Natural killer cell (primary cell): ENCODE measurements at regions of chr11 and their contacts with region 1.

Region 1: DNA sequence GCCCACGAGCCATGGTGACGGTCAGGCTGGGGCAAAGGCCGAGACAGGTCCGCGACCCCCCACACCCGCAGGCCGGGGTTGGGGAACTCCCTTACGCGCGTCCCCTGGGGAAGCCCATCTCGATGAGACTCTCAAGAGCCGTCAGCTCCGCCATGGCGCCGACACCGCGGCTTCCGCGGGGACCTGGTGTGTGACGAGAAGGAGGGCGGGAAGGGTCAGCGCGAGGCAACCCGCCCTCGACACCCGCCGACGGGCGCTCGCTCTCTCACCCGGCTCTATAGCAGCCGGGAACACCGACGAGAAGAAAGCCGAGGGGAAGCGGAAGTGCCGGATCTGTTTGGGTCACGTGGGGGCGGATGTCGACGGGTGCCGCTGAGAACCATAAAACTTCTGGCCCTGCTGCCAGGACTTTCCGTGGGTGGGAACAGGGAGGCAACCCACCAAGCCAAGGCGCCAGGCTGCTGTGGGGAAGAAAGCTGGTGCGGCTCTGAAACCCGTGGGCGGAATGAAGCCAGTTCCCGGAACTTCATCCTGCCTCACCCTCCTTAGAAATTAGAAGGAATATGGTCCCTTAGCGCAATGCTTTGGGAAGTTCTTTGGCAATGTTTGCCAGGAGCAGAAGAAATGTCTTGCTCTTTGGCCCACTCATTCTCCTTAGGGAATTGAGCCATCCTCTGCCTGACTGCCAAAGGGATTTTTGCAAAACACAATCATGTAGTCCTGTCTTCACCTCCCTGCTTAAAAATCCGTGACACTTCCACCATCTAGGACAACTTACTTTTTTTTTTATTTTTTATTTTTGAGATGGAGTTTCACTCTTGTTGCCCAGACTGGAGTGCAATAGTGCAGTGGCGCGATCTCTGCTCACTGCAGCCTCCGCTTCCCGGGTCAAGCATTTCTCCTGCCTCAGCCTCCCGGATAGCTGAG is at the start of gene UBXN1:
- DNase-seq: peak; percentile 79 to 92
- ATAC-seq: peak; percentile 85 to 91 (median 89)
- H3K4me3 ChIP-seq: peak within 1 kb of the TSS; percentile 98
- H3K4me3 Mint-ChIP-seq: peak within 1 kb of the TSS; percentile 93
- H3K27ac ChIP-seq: peak within 1 kb of the TSS; percentile 95
- H3K27ac Mint-ChIP-seq: peak within 1 kb of the TSS; percentile 95 to 99
- H3K4me1 ChIP-seq: peaks cover 21% of the 10 kb centered on the region
- H3K4me1 Mint-ChIP-seq: peaks cover 26 to 31% of the 10 kb centered on the region in 2 donors
- H3K27me3 ChIP-seq: no peaks in the 10 kb centered on the region
- H3K27me3 Mint-ChIP-seq: no peaks in the 10 kb centered on the region
- CTCF ChIP-seq: no peak
- total RNA-seq, gene UBXN1: 179 to 238 (median 238) TPM

Region 2: GRCh38 chr11:61776551-61777075 is 902.4 kb before region 1 on chr11:
- intact Hi-C with region 1: no loop called
- DNase-seq: peak; percentile 55 to 71
- ATAC-seq: peak; percentile 55 to 67 (median 60)
- H3K4me3 ChIP-seq: no peak overlapping the region
- H3K4me3 Mint-ChIP-seq: peak overlapping the region; percentile 69
- H3K27ac ChIP-seq: no peak overlapping the region
- H3K27ac Mint-ChIP-seq: peak overlapping the region; percentile 56 to 85
- H3K4me1 ChIP-seq: peaks cover 42% of the 10 kb centered on the region
- H3K4me1 Mint-ChIP-seq: peaks cover 13 to 28% of the 10 kb centered on the region in 2 donors
- H3K27me3 ChIP-seq: no peaks in the 10 kb centered on the region
- H3K27me3 Mint-ChIP-seq: no peaks in the 10 kb centered on the region
- CTCF ChIP-seq: peak; percentile 70

Region 3: DNA sequence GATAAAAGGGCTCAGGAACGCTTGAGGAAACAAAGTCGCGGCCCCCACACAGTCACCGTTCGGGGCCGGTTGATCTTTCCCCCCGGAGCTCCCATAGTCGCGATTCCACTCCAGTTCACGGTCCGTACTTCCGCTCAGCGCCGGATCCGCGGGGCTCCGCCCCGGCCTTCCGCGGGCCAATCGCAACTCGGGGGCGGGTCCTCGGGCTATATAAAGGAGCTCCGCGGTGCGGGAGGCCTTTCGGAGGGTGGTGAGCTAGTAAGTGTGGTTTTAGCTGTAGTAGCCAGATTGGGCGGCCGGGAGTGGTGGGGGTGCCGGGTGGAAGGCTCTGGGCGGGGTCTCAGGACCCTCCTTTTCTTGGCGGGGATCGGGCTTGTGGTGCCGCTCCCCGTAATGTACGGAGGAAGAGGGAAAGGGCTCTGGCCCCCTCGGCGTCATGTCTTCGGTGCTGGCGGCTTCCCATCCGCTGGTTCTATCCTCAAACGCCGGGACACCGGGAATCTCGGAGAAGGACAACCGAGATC is 13.9 kb before region 1 on chr11 and contains the starts of genes C11orf98 and CSKMT:
- intact Hi-C with region 1: loop called (anchors 1 kb)
- DNase-seq: peak; percentile 96
- ATAC-seq: peak; percentile 92 to 97 (median 95)
- H3K4me3 ChIP-seq: peak within 1 kb of the TSS; percentile 87
- H3K4me3 Mint-ChIP-seq: peak within 1 kb of the TSS; percentile 96
- H3K27ac ChIP-seq: peak within 1 kb of the TSS; percentile 80
- H3K27ac Mint-ChIP-seq: peak within 1 kb of the TSS; percentile 87 to 95
- H3K4me1 ChIP-seq: peaks cover 28% of the 10 kb centered on the region
- H3K4me1 Mint-ChIP-seq: peaks cover 6 to 29% of the 10 kb centered on the region in 2 donors
- H3K27me3 ChIP-seq: no peaks in the 10 kb centered on the region
- H3K27me3 Mint-ChIP-seq: no peaks in the 10 kb centered on the region
- CTCF ChIP-seq: no peak
- total RNA-seq, gene C11orf98: 36.5 to 57.9 (median 39.1) TPM
- total RNA-seq, gene CSKMT: 12.0 to 21.5 (median 13.7) TPM

Region 4: DNA sequence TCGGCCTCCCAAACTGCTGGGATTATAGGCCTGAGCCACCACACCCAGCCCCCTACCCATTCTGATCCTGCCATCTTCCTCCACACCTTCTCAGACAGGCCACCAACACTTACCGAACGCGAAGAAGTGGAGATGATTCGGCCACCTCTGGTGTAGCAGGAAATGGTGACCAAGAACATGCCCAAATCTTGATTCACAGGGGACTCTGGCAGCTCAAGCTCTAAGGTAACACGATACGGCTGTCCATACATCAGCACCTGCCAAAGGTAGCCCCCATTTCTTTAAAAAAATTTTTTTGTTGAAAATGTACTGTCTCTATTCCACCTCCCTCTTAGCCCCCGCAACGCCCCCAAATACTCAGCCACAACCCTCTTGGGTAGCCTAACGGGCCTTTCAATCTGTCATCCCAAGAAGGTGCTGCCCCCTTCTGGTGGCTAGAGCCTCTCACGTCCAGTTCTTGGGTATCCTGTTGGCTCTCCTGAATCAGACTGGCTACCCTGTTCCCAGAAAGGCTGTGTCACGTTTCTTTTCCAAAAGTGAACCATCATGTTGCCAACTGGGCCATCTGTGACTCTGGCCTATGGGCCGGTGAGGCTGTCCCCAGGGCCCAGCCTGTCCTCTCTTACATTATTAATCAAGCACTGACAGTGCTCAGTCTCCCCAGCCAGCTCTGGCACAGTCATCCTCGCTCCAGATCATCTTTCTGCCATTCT is 15.6 kb after region 1 on chr11:
- intact Hi-C with region 1: loop called (anchors 1 kb)
- DNase-seq: peak; percentile 72 to 91
- ATAC-seq: peak; percentile 78 to 98 (median 96)
- H3K4me3 ChIP-seq: no peak overlapping the region
- H3K4me3 Mint-ChIP-seq: no peak overlapping the region
- H3K27ac ChIP-seq: no peak overlapping the region
- H3K27ac Mint-ChIP-seq: peak overlapping the region in 1 of 2 donors; percentile 7
- H3K4me1 ChIP-seq: no peaks in the 10 kb centered on the region
- H3K4me1 Mint-ChIP-seq: peaks cover 8% of the 10 kb centered on the region in 2 donors
- H3K27me3 ChIP-seq: no peaks in the 10 kb centered on the region
- H3K27me3 Mint-ChIP-seq: no peaks in the 10 kb centered on the region
- CTCF ChIP-seq: peak; percentile 84